Sigmoid colon (tissue), 7 donors: ENCODE measurements at regions of chr7 and their contacts with region 1.

Region 1: DNA sequence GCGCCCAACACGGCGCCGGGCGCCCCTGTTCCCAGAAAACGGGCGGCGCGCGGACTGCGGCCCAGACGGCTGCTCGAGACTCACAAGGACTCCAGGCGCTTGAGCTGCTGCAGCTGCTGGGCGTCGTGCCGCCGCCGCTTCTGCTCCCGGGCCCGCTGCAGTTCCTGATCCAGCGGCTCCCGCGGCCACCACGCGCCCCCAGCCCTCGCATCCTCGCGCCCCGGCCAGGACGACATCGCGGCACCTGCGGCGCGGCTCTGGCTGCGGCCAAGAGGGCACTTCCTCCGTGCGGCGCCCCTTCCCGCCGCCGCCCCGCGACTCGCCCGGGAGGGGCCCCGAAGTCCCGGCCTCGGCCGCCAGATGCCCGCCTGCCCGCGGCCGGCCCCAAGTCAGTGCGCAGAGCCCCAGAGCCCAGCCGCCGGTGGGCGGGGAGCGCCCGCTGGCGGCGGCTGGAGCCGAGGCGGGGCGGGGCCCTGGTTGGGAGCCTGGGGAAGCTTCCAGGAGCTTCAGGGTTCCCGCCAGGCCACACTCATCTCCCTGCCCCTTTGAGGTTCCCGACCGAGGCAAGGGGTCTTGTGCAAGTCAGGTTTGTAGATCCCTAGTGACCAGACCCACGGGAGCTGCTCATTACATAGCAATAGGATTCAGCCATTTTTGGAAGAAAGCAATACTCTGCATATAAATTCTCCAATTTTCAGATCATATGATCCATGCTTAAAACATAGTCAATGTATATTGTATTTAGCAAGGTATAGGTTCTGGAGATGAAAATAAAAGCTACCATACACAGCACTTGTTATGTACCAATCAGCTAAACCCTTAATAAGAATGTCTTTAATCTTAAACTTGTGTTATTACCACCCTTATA is 14.2 kb upstream of the FKBP9 start:
- DNase-seq: peak; percentile 89
- H3K4me3 ChIP-seq: peak overlapping the region; percentile 71 to 95 (median 86)
- H3K27ac ChIP-seq: peak overlapping the region; percentile 96 to 98 (median 98)
- H3K4me1 ChIP-seq: peaks cover 0 to 36% (median 21%) of the 10 kb centered on the region in 4 donors
- H3K27me3 ChIP-seq: no peaks in the 10 kb centered on the region
- CTCF ChIP-seq: peak in 1 of 4 experiments; percentile 56
- EP300 ChIP-seq: no peak
- POLR2A ChIP-seq: no peak

Region 2: DNA sequence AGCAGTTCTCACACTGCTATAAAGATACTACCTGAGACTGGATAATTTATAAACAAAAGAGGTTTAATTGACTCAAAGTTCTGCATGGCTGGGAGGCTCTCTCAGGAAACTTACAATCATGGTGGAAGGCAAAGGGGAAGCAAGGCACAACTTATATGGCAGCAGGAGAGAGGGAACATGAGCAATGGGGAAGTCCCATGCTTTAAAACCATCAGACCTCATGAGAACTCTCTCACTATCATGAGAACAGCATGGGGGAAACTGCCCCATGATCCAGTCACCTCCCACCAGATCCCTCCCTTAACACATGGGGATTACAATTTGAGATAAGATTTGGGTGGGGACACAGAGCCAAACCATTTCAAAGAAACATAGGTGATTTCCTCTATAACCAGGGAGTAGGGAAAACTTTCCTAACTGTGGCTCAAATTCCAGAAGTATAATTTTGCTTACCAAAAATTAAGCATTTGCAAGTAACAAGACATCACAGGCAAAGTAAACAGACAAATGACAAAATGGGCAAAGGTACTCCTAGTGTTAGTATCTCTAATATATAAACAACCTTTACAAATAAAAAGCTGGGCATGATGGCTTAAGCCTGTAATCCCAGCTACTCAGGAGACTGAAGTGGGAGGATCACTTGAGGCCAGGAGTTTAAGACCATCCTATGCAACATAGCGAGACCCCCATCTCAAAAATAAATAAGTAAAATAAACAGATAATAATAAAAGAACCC is 139.4 kb before region 1 on chr7:
- intact Hi-C with region 1: loop called (anchors 5 kb)
- DNase-seq: no peak
- H3K4me3 ChIP-seq: no peak overlapping the region
- H3K27ac ChIP-seq: no peak overlapping the region
- H3K4me1 ChIP-seq: no peaks in the 10 kb centered on the region
- H3K27me3 ChIP-seq: no peaks in the 10 kb centered on the region
- CTCF ChIP-seq: no peak
- EP300 ChIP-seq: no peak
- POLR2A ChIP-seq: no peak

Region 3: DNA sequence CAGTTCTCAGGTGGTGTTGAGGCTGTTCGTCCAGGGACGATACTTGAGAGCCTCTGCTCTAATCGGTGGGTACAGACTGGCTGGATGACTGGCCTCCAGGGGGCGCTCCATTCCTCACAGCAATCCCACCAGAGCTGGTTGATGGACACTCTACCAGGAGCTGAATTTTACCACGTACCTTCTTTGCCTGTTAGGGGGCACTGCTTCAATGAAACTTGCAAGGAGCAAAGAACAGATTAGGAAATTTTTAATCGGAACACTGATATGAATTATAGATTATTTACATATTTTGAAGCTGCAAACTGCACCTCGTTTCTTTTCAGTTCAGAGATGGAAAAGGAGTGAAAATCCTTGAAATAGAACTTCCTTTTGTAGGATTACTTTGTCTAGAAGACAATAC is 96.3 kb before region 1 on chr7:
- intact Hi-C with region 1: loop called (anchors 2 kb)
- DNase-seq: peak; percentile 94
- H3K4me3 ChIP-seq: no peak overlapping the region
- H3K27ac ChIP-seq: no peak overlapping the region
- H3K4me1 ChIP-seq: peaks cover 0 to 7% (median 2%) of the 10 kb centered on the region in 4 donors
- H3K27me3 ChIP-seq: no peaks in the 10 kb centered on the region
- CTCF ChIP-seq: peak; percentile 84 to 91 (median 87)
- EP300 ChIP-seq: no peak
- POLR2A ChIP-seq: no peak

Region 4: GRCh38 chr7:32858648-32859047 is 84.4 kb before region 1 on chr7:
- intact Hi-C with region 1: no loop called
- DNase-seq: no peak
- H3K4me3 ChIP-seq: no peak overlapping the region
- H3K27ac ChIP-seq: no peak overlapping the region
- H3K4me1 ChIP-seq: no peaks in the 10 kb centered on the region
- H3K27me3 ChIP-seq: no peaks in the 10 kb centered on the region
- CTCF ChIP-seq: no peak
- EP300 ChIP-seq: no peak
- POLR2A ChIP-seq: no peak

Region 5: DNA sequence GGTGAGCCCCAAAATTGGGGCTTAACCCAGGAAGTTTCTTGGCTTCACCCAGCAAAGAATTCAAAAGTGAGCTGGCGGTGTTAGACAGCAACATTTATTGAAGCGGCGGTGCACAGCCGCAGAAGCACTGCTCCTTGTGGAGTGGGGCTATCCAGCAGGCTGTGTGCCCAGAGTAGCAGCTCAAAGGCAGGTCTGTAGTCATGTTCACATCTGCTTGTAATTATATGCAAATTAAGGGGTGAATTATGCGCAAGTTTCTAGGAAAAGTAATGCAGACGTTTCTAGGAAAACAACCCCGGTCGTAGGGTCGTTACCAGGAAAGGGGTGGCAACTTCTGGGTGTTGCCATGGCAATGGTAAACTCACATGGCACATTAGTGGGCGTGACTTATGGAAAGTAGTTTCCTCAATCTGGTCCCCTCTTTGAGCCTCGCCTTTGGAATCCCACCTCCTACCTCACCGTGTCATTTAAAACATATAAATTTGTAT is 37.8 kb before region 1 on chr7:
- intact Hi-C with region 1: no loop called
- DNase-seq: no peak
- H3K4me3 ChIP-seq: peak overlapping the region in 3 of 4 donors; percentile 7 to 28 (median 25)
- H3K27ac ChIP-seq: no peak overlapping the region
- H3K4me1 ChIP-seq: peaks cover 0 to 8% (median 7%) of the 10 kb centered on the region in 4 donors
- H3K27me3 ChIP-seq: no peaks in the 10 kb centered on the region
- CTCF ChIP-seq: no peak
- EP300 ChIP-seq: no peak
- POLR2A ChIP-seq: no peak

Region 6: GRCh38 chr7:32957326-32958045 is 14.5 kb after region 1 on chr7 and contains the start of gene FKBP9:
- intact Hi-C with region 1: loop called (anchors 2 kb)
- DNase-seq: peak; percentile 89
- H3K4me3 ChIP-seq: peak within 1 kb of the TSS; percentile 61 to 96 (median 82)
- H3K27ac ChIP-seq: peak within 1 kb of the TSS; percentile 90 to 93 (median 92)
- H3K4me1 ChIP-seq: peaks cover 0 to 16% (median 11%) of the 10 kb centered on the region in 4 donors
- H3K27me3 ChIP-seq: no peaks in the 10 kb centered on the region
- CTCF ChIP-seq: no peak
- EP300 ChIP-seq: no peak
- POLR2A ChIP-seq: peak in 1 of 2 donors; percentile 59
- total RNA-seq, gene FKBP9: 79.6 to 161 (median 114) TPM

Region 7: GRCh38 chr7:33062782-33063443 is 119.9 kb after region 1 on chr7:
- intact Hi-C with region 1: loop called (anchors 5 kb)
- DNase-seq: peak; percentile 96
- H3K4me3 ChIP-seq: peak overlapping the region; percentile 64 to 74 (median 68)
- H3K27ac ChIP-seq: peak overlapping the region; percentile 89 to 97 (median 92)
- H3K4me1 ChIP-seq: peaks cover 0 to 30% (median 17%) of the 10 kb centered on the region in 4 donors
- H3K27me3 ChIP-seq: no peaks in the 10 kb centered on the region
- CTCF ChIP-seq: no peak
- EP300 ChIP-seq: no peak
- POLR2A ChIP-seq: peak; percentile 53 to 54

Region 8: GRCh38 chr7:33109005-33109757 is 166.2 kb after region 1 on chr7 and contains the start of gene RP9:
- intact Hi-C with region 1: loop called (anchors 5 kb)
- DNase-seq: peak; percentile 77
- H3K4me3 ChIP-seq: peak within 1 kb of the TSS; percentile 60 to 99 (median 97)
- H3K27ac ChIP-seq: peak within 1 kb of the TSS; percentile 82 to 89 (median 88)
- H3K4me1 ChIP-seq: peaks cover 0 to 39% (median 30%) of the 10 kb centered on the region in 4 donors
- H3K27me3 ChIP-seq: no peaks in the 10 kb centered on the region
- CTCF ChIP-seq: peak in 2 of 4 experiments; percentile 30 to 63
- EP300 ChIP-seq: no peak
- POLR2A ChIP-seq: no peak
- total RNA-seq, gene RP9: 6.9 to 24.6 (median 9.2) TPM